ENCODE measurements at regions of chr1 and their contacts with region 1.

Region 1: GRCh38 chr1:18597160-18598042 is 33.2 kb upstream of the PAX7 start:
- DNase-seq: peak; percentile 77
- H3K4me3 ChIP-seq: no peak overlapping the region; a peak in 1 of 4 replicates
- H3K27ac ChIP-seq: no peak overlapping the region
- H3K4me1 ChIP-seq: peaks cover 0 to 10% of the 10 kb centered on the region in 2 experiments; a peak in 1 of 4 replicates
- H3K27me3 ChIP-seq: peaks cover 4% of the 10 kb centered on the region; the same call in 1 of the 2 replicates
- CTCF ChIP-seq: peak; percentile 93
- EP300 ChIP-seq: no peak
- RAD21 ChIP-seq: peak; percentile 94

Region 2: GRCh38 chr1:18429654-18430053 is 167.7 kb before region 1 on chr1:
- CTCF ChIA-PET with region 1: no interaction called
- POLR2A ChIA-PET with region 1: no interaction called
- DNase-seq: no peak
- H3K4me3 ChIP-seq: no peak overlapping the region
- H3K27ac ChIP-seq: no peak overlapping the region
- H3K4me1 ChIP-seq: no peaks in the 10 kb centered on the region; a peak in 1 of 4 replicates
- H3K27me3 ChIP-seq: no peaks in the 10 kb centered on the region
- CTCF ChIP-seq: no peak
- EP300 ChIP-seq: no peak
- RAD21 ChIP-seq: no peak

Region 3: GRCh38 chr1:18575620-18576019 is 21.8 kb before region 1 on chr1:
- CTCF ChIA-PET with region 1: interaction called, 25 read pairs
- POLR2A ChIA-PET with region 1: no interaction called
- DNase-seq: peak; percentile 80
- H3K4me3 ChIP-seq: no peak overlapping the region; a peak in 1 of 4 replicates
- H3K27ac ChIP-seq: no peak overlapping the region
- H3K4me1 ChIP-seq: no peaks in the 10 kb centered on the region
- H3K27me3 ChIP-seq: no peaks in the 10 kb centered on the region
- CTCF ChIP-seq: peak; percentile 66
- EP300 ChIP-seq: no peak
- RAD21 ChIP-seq: peak; percentile 78

Region 4: DNA sequence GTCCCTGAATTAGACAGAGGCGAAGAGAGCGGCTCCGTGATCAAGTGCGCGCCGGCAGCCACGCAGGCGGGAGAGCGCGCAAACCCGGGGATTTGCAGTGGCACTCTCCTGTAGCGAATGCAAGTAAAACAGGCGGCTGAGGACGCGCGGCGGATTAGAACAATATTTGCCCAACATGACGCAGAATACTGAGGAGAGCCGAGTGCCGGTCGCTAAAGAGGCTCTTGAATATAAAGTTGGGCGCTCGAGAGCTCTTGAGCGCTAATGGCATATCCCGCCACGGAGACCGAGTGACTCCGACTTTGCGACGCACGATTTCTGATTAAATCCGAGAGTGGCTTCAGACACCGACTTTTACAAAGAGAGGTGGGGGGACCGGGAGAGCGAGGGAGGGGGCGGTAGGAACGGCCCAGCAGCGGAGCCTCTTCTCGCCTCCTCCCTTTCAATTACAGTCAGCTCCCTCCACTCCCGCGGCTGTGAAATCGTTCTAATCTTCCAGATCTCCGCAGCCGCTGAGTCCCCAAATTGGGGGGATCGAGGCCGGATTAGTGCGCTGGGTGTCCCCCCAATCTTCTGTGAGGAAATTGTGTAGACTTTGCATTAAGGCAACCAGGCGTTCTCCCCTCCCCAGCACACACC is 35.5 kb after region 1 on chr1:
- CTCF ChIA-PET with region 1: interaction called, 23 read pairs
- POLR2A ChIA-PET with region 1: no interaction called
- DNase-seq: peak; percentile 49
- H3K4me3 ChIP-seq: no peak overlapping the region
- H3K27ac ChIP-seq: no peak overlapping the region
- H3K4me1 ChIP-seq: no peaks in the 10 kb centered on the region
- H3K27me3 ChIP-seq: peaks cover 87% of the 10 kb centered on the region
- CTCF ChIP-seq: no peak
- EP300 ChIP-seq: no peak
- RAD21 ChIP-seq: no peak

Region 5: DNA sequence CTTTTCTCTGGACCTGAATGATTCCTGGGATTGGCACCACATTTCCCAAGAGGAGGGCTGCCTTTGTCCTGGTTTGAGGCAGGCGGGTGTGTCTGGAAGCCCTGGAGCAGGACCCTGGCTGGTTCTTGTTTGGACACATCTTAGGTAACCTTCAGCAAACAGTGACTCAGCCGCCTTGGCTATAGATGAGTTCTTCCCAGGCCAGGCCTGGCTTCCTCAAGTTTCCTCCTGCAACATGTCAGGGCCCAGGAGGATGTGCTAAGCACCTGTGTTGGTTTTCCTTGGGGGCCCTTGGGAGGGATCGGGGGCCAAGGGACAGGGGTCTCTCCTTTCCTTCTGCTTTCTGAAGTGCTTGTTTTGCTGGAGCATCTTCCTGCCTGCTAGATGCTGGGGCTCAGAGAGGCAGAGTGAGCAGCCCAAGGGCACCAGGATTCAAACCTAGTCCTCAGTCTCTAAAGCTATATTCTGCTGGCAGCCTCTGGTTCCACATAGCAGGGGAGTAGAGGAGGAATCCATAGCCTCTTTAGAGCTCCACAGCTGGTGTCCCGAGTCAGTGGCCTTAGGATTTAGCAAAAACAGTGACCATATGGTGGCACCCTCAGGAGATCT is 71.5 kb after region 1 on chr1:
- CTCF ChIA-PET with region 1: interaction called, 26 read pairs
- POLR2A ChIA-PET with region 1: no interaction called
- DNase-seq: no peak
- H3K4me3 ChIP-seq: no peak overlapping the region
- H3K27ac ChIP-seq: no peak overlapping the region
- H3K4me1 ChIP-seq: peaks cover 0 to 13% of the 10 kb centered on the region in 2 experiments; a peak in 1 of 4 replicates
- H3K27me3 ChIP-seq: no peaks in the 10 kb centered on the region
- CTCF ChIP-seq: no peak
- EP300 ChIP-seq: no peak
- RAD21 ChIP-seq: no peak

Region 6: GRCh38 chr1:18809953-18810899 is 212.8 kb after region 1 on chr1:
- CTCF ChIA-PET with region 1: interaction called, 279 read pairs
- POLR2A ChIA-PET with region 1: no interaction called
- DNase-seq: no peak
- H3K4me3 ChIP-seq: no peak overlapping the region
- H3K27ac ChIP-seq: no peak overlapping the region
- H3K4me1 ChIP-seq: no peaks in the 10 kb centered on the region; a peak in 1 of 4 replicates
- H3K27me3 ChIP-seq: no peaks in the 10 kb centered on the region
- CTCF ChIP-seq: no peak
- EP300 ChIP-seq: no peak
- RAD21 ChIP-seq: no peak

Region 7: DNA sequence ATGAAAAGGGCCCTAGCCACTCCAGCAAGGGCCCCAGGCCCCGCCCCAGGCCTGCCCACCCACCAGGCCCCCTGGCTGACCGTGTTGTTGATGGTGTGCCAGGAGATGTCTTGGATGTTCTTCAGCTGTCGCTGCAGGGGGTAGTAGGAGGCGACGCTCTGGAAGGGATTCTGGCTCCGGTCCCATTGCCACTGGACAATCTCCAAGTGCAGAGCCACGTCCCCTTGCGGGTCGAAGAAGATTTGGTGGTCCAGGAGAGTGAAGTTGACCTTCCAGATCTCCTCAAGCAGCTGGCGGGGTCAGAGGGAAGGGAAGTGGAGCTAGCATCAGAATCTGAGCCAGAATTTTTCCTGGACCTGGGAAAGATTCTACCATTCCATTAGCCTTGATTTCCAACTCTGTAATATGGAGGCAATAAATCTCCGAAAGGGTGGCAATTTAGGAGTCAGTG is 251.9 kb after region 1 on chr1:
- CTCF ChIA-PET with region 1: interaction called, 15 read pairs
- POLR2A ChIA-PET with region 1: no interaction called
- DNase-seq: no peak
- H3K4me3 ChIP-seq: no peak overlapping the region
- H3K27ac ChIP-seq: no peak overlapping the region
- H3K4me1 ChIP-seq: peaks cover 0 to 2% of the 10 kb centered on the region in 2 experiments; a peak in 1 of 4 replicates
- H3K27me3 ChIP-seq: no peaks in the 10 kb centered on the region
- CTCF ChIP-seq: no peak
- EP300 ChIP-seq: no peak
- RAD21 ChIP-seq: no peak

Region 8: DNA sequence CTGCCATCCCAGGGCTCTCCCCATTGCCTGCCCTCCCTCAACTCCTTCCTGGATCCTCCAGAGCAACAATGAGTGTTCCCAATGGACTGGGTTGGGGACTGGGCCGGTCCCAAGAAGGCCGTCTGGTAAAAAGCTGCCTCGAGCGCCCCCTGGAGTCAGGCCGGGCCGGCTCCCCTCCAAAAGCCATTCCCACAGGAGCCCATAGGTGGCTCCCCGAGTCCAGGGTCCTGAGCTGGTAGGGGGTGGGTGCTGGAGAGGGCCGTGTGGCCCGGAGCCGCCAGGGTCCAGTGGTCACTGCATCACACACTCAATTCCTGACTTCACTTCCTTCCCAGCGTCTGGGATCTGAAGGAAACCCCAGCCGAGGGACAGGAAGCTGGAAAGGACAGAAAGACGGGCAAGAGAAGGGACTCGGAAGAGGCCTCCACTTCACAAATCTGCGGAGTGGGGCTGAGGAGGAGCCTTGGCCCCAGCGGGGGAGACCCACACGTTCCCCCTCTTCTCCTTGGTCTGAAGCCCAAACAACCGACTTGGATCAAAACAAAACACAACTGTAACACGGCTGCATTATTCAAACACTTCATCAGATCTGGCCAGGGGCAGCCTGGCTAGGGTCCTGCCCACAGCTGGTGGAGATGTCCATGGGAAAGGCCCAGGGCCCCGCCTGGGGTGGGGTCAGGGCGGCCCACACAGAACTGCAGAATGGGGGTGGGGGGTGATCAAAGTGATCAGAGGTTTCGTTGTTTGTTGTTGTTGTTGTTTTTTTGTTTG is 315.8 kb after region 1 on chr1:
- CTCF ChIA-PET with region 1: interaction called, 40 read pairs
- POLR2A ChIA-PET with region 1: no interaction called
- DNase-seq: peak; percentile 95
- H3K4me3 ChIP-seq: no peak overlapping the region; a peak in 1 of 4 replicates
- H3K27ac ChIP-seq: no peak overlapping the region
- H3K4me1 ChIP-seq: no peaks in the 10 kb centered on the region; a peak in 1 of 4 replicates
- H3K27me3 ChIP-seq: no peaks in the 10 kb centered on the region
- CTCF ChIP-seq: peak; percentile 98
- EP300 ChIP-seq: no peak
- RAD21 ChIP-seq: peak; percentile 88

Measured in SK-N-SH (cell line).